ENCODE measurements at regions of chr12 and their contacts with region 1.

Region 1: DNA sequence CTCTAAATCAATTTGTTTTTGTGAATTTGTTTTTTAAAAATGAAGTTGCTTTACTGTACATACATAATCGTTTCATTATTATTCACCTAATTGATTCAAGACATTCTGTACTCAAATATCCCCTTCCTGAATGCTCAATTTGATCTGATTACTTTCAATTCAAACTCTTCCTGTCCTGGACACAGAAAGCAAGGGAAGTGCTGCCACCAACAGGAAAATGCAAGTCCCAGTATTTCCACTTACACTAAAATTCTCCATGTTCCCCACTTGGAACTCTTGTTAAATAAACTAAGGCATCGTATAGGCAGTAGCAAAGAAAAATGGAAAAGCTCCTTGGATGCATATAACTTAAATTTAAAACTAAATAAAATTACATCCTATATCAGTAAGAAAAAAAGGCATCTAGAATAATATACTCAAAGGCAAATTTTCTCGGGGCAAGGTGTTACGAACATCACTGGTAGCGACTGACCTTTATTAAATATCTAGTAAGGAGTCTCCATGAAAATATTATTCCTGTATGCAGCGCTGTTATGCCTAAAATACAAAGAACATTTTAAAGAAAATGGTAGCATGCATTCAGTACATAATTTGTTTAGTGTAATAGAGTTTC is 72.0 kb upstream of the DBX2 start:
- DNase-seq: peak; percentile 41
- H3K4me3 ChIP-seq: peak overlapping the region in 1 of 2 experiments; percentile 20; a peak in 1 of 4 replicates
- H3K27ac ChIP-seq: no peak overlapping the region
- H3K4me1 ChIP-seq: no peaks in the 10 kb centered on the region; a peak in 1 of 4 replicates
- H3K27me3 ChIP-seq: no peaks in the 10 kb centered on the region
- CTCF ChIP-seq: peak; percentile 55
- EP300 ChIP-seq: no peak
- RAD21 ChIP-seq: peak; percentile 82

Region 2: DNA sequence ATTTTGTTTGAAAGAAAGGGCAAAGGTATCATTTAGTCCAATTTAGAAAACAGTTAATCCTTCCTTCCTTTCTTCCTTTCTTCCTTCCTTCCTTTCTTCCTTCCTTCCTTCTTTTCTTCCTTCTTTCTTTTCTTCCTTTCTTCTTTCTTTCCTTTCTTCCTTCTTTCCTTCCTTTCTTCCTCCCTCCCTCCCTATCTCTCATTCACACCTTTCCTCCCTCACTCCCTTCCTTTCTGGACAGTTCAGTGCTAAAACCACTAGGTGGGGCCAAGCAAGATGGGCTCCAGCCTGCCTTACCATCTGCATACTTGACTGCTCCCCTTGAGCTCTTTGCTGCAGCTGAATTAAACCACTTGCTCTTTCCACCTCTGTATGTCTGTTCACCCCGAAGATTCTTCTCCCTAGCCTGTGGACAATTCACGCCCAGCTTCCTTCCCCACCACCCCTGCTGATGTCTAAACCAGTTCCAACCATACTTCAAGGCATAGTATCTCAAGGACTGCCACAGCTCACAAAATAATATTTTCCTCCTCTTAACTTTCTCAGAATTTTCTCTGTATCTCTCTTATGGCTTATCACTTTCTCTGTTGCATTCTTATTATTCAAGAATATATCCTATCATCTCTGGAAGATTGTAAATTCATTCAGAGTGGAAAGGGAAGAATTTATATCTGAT is 150.0 kb before region 1 on chr12:
- CTCF ChIA-PET with region 1: interaction called, 25 read pairs
- POLR2A ChIA-PET with region 1: no interaction called
- DNase-seq: peak; percentile 46
- H3K4me3 ChIP-seq: no peak overlapping the region; a peak in 1 of 4 replicates
- H3K27ac ChIP-seq: no peak overlapping the region
- H3K4me1 ChIP-seq: no peaks in the 10 kb centered on the region
- H3K27me3 ChIP-seq: no peaks in the 10 kb centered on the region
- CTCF ChIP-seq: peak; percentile 57
- EP300 ChIP-seq: no peak
- RAD21 ChIP-seq: peak; percentile 50

Region 3: DNA sequence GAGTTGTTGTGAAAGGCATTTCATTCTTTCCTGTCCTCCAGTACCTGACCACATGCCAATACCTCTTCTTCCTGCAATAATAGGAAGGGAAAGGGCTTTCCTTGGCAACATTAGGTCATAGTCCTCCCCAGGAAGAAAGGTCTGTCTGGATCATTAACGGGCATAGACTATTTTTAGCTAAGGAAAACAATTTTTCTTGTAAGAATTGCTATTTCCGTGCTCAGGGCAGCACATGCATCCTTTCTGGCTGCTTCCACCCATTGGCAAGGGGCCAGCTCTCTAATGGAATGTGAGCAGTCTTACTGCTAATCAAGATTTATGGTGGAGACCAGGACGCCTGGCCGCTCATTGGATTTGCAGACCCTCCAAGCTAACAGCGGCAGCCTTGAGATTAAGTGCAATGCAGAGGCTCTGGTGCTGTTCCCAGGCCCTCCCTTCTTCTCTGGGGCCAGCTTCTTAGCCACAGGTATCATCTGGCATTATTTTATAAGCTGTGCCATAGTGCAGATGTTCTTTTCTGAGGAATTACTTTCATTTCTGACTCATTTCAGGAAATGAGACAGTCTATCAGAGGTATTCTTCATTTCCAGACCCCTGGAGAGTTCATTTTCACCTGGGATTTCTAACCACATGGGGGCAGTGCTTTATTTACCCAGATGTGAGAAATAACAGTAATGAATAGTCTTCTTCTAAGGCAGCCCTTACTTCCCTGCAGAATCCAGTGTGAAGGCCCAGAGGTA is 146.0 kb after region 1 on chr12:
- CTCF ChIA-PET with region 1: no interaction called
- POLR2A ChIA-PET with region 1: no interaction called
- DNase-seq: peak; percentile 58
- H3K4me3 ChIP-seq: peak overlapping the region; percentile 19 to 31; a peak in 2 of 4 replicates
- H3K27ac ChIP-seq: peak overlapping the region; percentile 87 to 93
- H3K4me1 ChIP-seq: peaks cover 19 to 26% of the 10 kb centered on the region in 2 experiments
- H3K27me3 ChIP-seq: no peaks in the 10 kb centered on the region
- CTCF ChIP-seq: peak; percentile 72
- EP300 ChIP-seq: peak; percentile 82 to 84
- RAD21 ChIP-seq: peak; percentile 77